Vagina (tissue), 2 donors: ENCODE measurements at regions of chrX and their contacts with region 1.

Region 1: DNA sequence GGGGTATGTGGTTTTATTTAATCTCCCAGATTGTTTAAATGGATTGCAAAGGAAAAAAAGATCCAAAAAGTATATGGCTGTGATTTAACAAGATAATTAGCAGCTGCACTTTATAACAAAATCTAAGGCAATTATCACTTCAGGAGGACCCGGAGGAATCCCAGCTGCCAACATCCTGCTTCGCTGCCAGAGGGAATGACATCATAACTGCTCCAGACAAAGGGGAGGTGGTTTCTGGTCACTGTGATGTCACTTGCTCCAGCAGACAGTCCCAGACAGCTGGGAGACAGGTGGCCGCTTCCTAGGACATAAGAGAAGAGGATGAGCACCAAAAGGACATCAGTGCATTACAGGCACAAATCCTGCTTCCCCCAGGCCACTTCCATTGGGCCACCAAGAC is 371.0 kb downstream of the BCOR start:
- DNase-seq: no peak
- H3K4me3 ChIP-seq: no peak overlapping the region
- H3K27ac ChIP-seq: no peak overlapping the region
- H3K4me1 ChIP-seq: no peaks in the 10 kb centered on the region
- H3K27me3 ChIP-seq: no peaks in the 10 kb centered on the region
- CTCF ChIP-seq: no peak
- POLR2A ChIP-seq: no peak

Region 2: GRCh38 chrX:39645178-39645895 is 81.4 kb before region 1 on chrX:
- intact Hi-C with region 1: no loop called
- DNase-seq: no peak
- H3K4me3 ChIP-seq: no peak overlapping the region
- H3K27ac ChIP-seq: no peak overlapping the region
- H3K4me1 ChIP-seq: no peaks in the 10 kb centered on the region
- H3K27me3 ChIP-seq: no peaks in the 10 kb centered on the region
- CTCF ChIP-seq: no peak
- POLR2A ChIP-seq: no peak

Region 3: DNA sequence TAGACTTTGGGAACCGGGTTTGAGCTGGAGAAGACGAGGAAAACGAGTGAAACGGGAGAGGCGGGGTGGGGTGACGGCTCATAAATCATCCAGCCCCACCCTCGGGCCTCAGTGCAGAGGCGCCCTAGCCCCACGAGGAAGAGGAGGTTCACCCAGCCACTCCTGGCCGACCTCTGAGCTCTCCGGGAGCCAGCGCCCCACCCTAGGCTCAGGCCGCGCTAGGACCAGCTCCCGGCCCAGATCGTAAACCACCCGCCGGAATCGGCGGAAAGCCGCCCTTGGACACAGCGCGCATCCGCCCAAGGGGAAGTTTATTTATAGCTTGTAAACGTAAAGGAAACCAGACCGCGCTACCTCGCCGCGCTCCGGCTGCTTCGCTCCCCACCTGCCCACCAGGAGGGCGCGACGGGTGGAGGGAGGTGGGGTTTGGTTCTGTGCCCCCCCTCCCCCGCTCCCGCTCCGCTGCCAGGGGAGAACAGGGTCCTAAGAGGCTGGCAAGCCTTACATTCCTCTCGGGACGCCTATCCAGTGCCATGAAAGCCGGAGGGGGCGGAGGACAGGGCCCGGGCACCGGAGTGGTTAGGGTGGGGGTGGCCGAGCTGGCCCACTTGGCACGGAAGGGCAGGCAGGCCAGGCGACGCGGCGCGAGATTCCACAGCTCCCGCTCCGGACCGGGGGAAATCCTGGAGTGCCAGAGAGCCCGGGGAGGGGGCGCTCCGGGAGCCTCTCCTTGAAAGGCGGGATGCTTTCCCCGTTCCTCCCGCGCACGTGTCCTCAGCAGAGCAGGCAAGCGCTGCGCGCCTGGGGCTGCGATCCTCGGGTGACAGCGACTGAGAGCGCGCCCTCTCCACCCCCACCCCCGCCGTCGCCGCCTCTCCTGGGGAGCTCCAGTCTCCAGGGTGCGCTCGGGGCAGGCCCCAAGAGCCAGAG is 286.8 kb after region 1 on chrX:
- intact Hi-C with region 1: loop called (anchors 10 kb)
- DNase-seq: no peak
- H3K4me3 ChIP-seq: peak overlapping the region; percentile 49 to 52
- H3K27ac ChIP-seq: peak overlapping the region; percentile 76
- H3K4me1 ChIP-seq: peaks cover 31% of the 10 kb centered on the region
- H3K27me3 ChIP-seq: no peaks in the 10 kb centered on the region
- CTCF ChIP-seq: no peak
- POLR2A ChIP-seq: no peak